Activated B cell treated with CpG ODN at 0.5 μM for 24 hours (primary cell): ENCODE measurements at regions of chr12 and their contacts with region 1.

Region 1: DNA sequence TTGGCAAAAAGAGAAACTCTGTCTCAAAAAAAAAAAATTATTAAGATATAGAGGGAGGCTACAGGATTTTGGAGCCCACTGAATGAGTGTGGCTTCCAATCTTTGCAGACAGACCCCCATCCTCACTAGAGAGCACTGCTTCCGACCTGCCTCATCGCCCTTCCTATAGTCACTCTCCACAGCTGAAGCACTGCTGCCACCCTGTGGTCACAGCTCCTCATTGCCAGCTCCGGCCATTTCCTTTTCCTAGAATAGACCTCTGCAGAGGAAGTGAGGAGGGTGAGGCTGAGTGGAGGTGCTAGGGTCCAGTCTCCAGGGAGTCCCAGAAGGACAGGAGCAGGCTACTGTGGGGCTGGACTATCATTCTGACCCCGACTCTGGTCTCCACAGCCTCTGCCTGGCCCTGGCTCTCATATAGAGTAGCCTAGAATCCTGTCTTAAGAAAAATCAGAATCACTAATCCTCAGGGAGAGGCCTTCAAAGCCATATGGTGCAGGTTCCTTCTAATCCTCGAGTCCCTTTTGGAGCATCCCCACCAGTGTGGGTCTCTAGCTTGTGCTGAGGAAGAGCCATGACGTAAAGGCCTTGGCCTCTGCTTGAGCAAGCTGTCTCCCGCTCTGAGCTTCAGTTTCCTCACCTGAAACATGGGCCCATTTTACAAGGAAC is 1.4 kb upstream of the NPFF start:
- DNase-seq: peak; percentile 77
- ATAC-seq: peak; percentile 100
- H3K4me3 Mint-ChIP-seq: no peak overlapping the region
- H3K27ac Mint-ChIP-seq: peak overlapping the region; percentile 66
- H3K4me1 Mint-ChIP-seq: peaks cover 10% of the 10 kb centered on the region
- H3K27me3 Mint-ChIP-seq: no peaks in the 10 kb centered on the region
- CTCF ChIP-seq: peak; percentile 63

Region 2: GRCh38 chr12:53352331-53353256 is 156.1 kb before region 1 on chr12:
- CTCF ChIA-PET with region 1: interaction called, 39 read pairs
- POLR2A ChIA-PET with region 1: interaction called, 5 read pairs
- intact Hi-C with region 1: loop called (anchors 1 kb)
- DNase-seq: peak; percentile 56
- ATAC-seq: peak; percentile 100
- H3K4me3 Mint-ChIP-seq: no peak overlapping the region
- H3K27ac Mint-ChIP-seq: peak overlapping the region; percentile 37
- H3K4me1 Mint-ChIP-seq: peaks cover 4% of the 10 kb centered on the region
- H3K27me3 Mint-ChIP-seq: no peaks in the 10 kb centered on the region
- CTCF ChIP-seq: no peak

Region 3: DNA sequence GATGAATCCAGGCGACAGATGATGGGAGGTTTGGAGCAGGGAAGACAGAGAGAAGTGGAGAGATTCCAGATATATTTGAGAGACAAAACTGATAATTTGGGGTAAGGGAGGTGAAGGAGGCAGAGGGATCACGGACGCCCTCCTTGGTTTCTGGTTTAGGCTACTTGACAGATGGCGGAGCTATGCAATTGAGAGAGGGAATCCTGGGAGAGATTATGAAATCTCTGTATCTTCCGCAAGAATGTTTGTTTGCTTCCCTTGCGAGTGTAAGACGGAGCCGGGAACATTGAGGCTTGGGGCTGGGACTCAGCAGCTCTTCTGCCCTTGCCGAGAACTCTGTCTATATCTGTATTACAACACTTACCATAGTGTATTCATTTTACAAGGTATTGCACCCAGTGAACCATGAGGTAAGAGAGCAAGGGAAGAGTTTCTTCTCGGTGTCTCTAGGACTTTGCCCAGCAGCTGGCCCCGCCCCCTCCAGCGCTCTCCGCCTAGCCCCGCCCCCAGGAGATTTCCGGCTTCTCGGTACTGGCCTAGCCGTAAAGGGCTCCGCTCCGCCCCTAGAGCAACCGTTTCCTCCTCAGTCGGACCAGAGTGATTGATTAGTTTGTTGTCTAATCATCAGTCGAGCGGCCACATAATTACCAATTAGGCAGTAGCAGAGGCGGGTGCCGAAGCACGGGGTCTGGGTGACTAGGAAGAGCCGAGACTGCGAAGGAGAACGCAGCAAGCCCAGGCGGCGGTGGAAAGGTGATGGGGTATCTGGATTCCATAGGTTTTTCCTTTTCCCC is 67.4 kb before region 1 on chr12 and contains the start of gene PRR13:
- CTCF ChIA-PET with region 1: no interaction called
- POLR2A ChIA-PET with region 1: interaction called, 7 read pairs
- intact Hi-C with region 1: loop called (anchors 1 kb)
- DNase-seq: peak; percentile 88
- ATAC-seq: peak; percentile 98
- H3K4me3 Mint-ChIP-seq: peak within 1 kb of the TSS; percentile 93
- H3K27ac Mint-ChIP-seq: peak within 1 kb of the TSS; percentile 93
- H3K4me1 Mint-ChIP-seq: peaks cover 40% of the 10 kb centered on the region
- H3K27me3 Mint-ChIP-seq: no peaks in the 10 kb centered on the region
- CTCF ChIP-seq: no peak
- total RNA-seq, gene PRR13: 266 and 288 TPM in 2 replicates

Region 4: GRCh38 chr12:53451661-53452158 is 57.0 kb before region 1 on chr12 and contains the start of gene PCBP2:
- CTCF ChIA-PET with region 1: interaction called, 5 read pairs
- POLR2A ChIA-PET with region 1: interaction called, 6 read pairs
- intact Hi-C with region 1: loop called (anchors 1 kb)
- DNase-seq: peak; percentile 92
- ATAC-seq: peak; percentile 92
- H3K4me3 Mint-ChIP-seq: peak within 1 kb of the TSS; percentile 99
- H3K27ac Mint-ChIP-seq: peak within 1 kb of the TSS; percentile 99
- H3K4me1 Mint-ChIP-seq: peaks cover 30% of the 10 kb centered on the region
- H3K27me3 Mint-ChIP-seq: no peaks in the 10 kb centered on the region
- CTCF ChIP-seq: no peak
- total RNA-seq, gene PCBP2: 841 and 853 TPM in 2 replicates

Region 5: DNA sequence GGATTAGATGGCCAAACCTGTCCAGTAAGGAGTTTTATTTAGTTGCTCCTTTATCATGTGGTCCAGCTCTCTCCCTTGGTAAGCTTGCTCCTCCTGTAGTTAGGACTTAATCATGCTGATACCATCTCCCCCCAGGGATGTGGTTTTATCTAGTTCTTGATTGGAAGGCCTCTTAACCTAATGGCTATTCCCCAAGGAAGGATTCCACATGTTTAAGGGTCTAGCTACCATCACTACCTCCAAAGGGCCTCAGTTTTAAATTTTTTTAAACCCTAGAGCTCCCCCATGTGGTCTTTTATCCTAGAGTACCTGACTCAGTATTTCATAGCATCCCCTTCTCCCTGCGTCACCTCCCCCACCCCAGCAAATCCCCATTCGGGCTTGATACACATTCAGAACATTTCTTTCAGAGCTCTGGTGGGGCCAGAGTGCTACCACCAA is 31.9 kb before region 1 on chr12:
- CTCF ChIA-PET with region 1: interaction called, 16 read pairs
- POLR2A ChIA-PET with region 1: interaction called, 7 read pairs
- intact Hi-C with region 1: loop called (anchors 2 kb)
- DNase-seq: no peak
- ATAC-seq: peak; percentile 34
- H3K4me3 Mint-ChIP-seq: no peak overlapping the region
- H3K27ac Mint-ChIP-seq: no peak overlapping the region
- H3K4me1 Mint-ChIP-seq: peaks cover 2% of the 10 kb centered on the region
- H3K27me3 Mint-ChIP-seq: no peaks in the 10 kb centered on the region
- CTCF ChIP-seq: no peak

Region 6: GRCh38 chr12:53481957-53482586 is 26.6 kb before region 1 on chr12:
- CTCF ChIA-PET with region 1: interaction called, 16 read pairs
- POLR2A ChIA-PET with region 1: interaction called, 7 read pairs
- intact Hi-C with region 1: loop called (anchors 2 kb)
- DNase-seq: no peak
- ATAC-seq: peak; percentile 54
- H3K4me3 Mint-ChIP-seq: no peak overlapping the region
- H3K27ac Mint-ChIP-seq: no peak overlapping the region
- H3K4me1 Mint-ChIP-seq: peaks cover 3% of the 10 kb centered on the region
- H3K27me3 Mint-ChIP-seq: no peaks in the 10 kb centered on the region
- CTCF ChIP-seq: no peak

Region 7: GRCh38 chr12:53492830-53493611 is 15.6 kb before region 1 on chr12:
- CTCF ChIA-PET with region 1: interaction called, 7 read pairs
- POLR2A ChIA-PET with region 1: interaction called, 18 read pairs
- intact Hi-C with region 1: no loop called
- DNase-seq: peak; percentile 95
- ATAC-seq: peak; percentile 92
- H3K4me3 Mint-ChIP-seq: peak overlapping the region; percentile 87
- H3K27ac Mint-ChIP-seq: peak overlapping the region; percentile 84
- H3K4me1 Mint-ChIP-seq: peaks cover 21% of the 10 kb centered on the region
- H3K27me3 Mint-ChIP-seq: no peaks in the 10 kb centered on the region
- CTCF ChIP-seq: no peak